ENCODE measurements at regions of chr1 and their contacts with region 1.

Region 1: GRCh38 chr1:58515794-58516401 is 30.6 kb downstream of the OMA1 start:
- DNase-seq: peak; percentile 34
- H3K4me3 Mint-ChIP-seq: no peak overlapping the region
- H3K27ac Mint-ChIP-seq: no peak overlapping the region
- H3K4me1 Mint-ChIP-seq: peaks cover 3% of the 10 kb centered on the region
- H3K27me3 Mint-ChIP-seq: no peaks in the 10 kb centered on the region

Region 2: DNA sequence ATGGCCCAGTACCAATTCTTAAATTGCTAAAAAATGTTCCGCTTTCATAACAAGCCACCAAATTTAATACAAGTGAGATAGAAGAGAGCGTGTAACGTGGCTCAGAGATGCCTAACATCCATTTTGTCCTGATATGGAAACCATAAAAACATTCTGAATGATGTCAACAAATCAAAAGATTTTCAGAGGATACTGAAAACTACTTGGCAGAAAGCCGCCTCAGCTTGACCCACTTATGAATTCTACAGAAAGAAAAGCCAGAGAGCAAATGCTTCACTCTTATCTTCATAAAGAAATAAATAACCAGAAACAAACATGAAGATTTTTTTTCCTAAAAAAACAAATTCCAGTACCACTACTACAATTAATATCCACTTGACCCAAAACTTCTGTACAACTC is 10.6 kb before region 1 on chr1:
- CTCF ChIA-PET with region 1: no interaction called
- DNase-seq: no peak
- H3K4me3 Mint-ChIP-seq: no peak overlapping the region
- H3K27ac Mint-ChIP-seq: no peak overlapping the region
- H3K4me1 Mint-ChIP-seq: no peaks in the 10 kb centered on the region
- H3K27me3 Mint-ChIP-seq: no peaks in the 10 kb centered on the region

Region 3: DNA sequence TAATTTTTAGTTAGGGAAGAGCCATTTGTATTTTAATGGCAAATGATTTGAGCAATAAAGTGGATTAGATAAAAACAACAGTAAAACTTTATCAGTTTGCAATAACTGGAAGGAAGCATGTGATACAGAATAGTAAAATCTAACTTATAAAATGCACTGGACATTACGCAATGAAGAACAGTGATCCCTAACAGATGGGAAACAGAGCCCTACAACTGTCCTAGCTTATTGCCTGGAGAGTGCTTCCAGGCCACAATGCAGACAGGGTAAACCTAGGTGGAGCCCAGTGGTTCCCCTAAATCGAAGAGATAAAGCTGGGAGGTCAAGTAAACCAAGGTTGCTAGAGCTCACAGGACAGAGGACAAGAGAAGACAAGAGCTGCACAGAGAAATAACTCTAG is 23.7 kb after region 1 on chr1:
- CTCF ChIA-PET with region 1: interaction called, 69 read pairs
- DNase-seq: no peak
- H3K4me3 Mint-ChIP-seq: no peak overlapping the region
- H3K27ac Mint-ChIP-seq: no peak overlapping the region
- H3K4me1 Mint-ChIP-seq: no peaks in the 10 kb centered on the region
- H3K27me3 Mint-ChIP-seq: no peaks in the 10 kb centered on the region

Region 4: DNA sequence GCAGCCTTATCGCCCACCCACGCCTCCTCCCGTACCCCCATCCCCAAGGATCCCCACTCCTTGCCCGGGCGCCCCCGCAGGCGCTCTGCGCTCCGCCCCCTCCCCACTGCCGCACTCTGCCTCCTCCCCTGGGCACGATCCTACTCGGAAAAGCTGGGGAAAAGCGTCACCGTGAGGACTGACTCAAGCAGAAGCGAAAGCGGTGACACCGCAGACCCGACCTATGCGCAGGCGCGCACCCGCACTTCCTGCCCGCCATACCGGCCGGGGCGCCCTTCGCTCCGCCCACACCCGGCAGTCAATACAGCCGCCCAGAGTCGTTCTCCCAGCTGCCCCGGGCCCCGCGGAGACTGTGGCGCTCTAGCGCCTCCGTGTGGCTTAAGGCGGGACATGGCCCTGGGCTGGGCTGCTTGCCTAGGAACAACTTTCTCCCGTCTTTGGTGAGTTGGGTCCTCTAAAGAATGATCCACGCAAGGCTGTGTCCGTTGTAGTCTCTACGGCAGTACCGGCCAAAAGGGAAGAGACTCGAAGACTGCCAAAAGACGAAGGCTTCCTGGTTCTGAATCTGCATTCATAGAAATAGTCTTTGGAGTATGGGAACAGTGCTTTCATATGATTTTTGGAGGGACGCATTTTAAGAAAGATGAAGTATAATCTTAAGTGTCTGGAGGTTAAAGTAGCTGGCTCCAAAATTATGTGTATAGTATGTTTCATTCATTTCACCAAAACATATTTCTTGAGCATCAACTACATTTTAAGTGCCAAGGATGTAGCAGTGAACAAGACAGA is 30.8 kb after region 1 on chr1 and contains the start of gene OMA1:
- CTCF ChIA-PET with region 1: interaction called, 69 read pairs
- DNase-seq: peak; percentile 97
- H3K4me3 Mint-ChIP-seq: peak within 1 kb of the TSS; percentile 92
- H3K27ac Mint-ChIP-seq: peak within 1 kb of the TSS; percentile 98
- H3K4me1 Mint-ChIP-seq: peaks cover 19% of the 10 kb centered on the region
- H3K27me3 Mint-ChIP-seq: peaks cover 23% of the 10 kb centered on the region

Region 5: GRCh38 chr1:58652651-58653184 is 136.8 kb after region 1 on chr1:
- CTCF ChIA-PET with region 1: interaction called, 69 read pairs
- DNase-seq: peak; percentile 67
- H3K4me3 Mint-ChIP-seq: no peak overlapping the region
- H3K27ac Mint-ChIP-seq: no peak overlapping the region
- H3K4me1 Mint-ChIP-seq: peaks cover 22% of the 10 kb centered on the region
- H3K27me3 Mint-ChIP-seq: no peaks in the 10 kb centered on the region

Region 6: GRCh38 chr1:59759156-59759925 is 1243.4 kb after region 1 on chr1:
- CTCF ChIA-PET with region 1: interaction called, 14 read pairs
- DNase-seq: peak; percentile 79
- H3K4me3 Mint-ChIP-seq: no peak overlapping the region
- H3K27ac Mint-ChIP-seq: no peak overlapping the region
- H3K4me1 Mint-ChIP-seq: peaks cover 9% of the 10 kb centered on the region
- H3K27me3 Mint-ChIP-seq: peaks cover 4% of the 10 kb centered on the region

Measured in activated naive CD4-positive, alpha-beta T cell treated with anti-CD3 and anti-CD28 coated beads, Interleukin-2, amount 10 ng/mL, durations not matched to agents 7 days and 5 days (primary cell).